Brain microvascular endothelial cell (primary cell): ENCODE measurements at regions of chr5 and their contacts with region 1.

Region 1: DNA sequence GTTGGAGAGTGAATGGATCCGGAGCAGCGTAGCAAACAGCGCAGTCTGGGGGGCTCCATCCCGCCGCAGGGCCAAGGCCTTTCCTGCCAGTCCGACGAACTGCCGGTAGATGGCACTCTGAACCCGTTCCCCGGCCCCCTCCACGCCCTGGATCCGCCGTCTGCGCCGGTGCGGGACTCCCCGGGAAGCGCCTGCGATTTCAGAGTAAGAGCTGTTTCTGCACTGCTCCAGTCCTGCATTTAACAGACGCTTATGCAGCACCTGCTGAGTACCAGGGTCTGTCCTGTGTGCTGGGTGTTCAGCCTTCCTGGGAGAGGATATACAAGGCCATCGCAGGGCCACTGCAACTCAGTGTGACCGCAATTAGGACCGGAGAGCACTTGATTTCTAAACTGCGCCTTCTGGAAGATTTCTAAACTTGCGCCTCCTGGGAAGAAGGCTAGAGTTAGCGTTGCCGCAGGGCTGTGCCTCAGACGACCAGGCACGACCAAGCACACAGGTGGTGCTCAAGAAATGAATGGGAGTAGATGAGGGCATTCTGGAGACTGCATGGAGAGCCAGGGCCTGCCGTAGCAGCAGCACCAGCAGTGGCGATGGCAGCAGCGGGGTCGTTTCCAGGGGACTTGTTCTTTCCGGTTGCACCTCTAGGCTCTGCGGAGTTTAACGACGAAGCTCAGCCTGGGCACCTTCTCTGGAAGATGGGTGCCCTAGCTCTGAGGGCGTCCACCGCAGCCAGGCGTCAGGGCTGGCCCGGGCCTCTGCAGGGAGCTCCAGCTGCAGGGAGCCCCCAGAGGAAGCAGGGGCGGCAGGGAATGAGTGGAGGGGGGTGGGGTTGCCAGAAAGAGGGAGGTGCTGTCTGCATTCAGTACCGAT is 14.3 kb upstream of the TIFAB start:
- DNase-seq: peak; percentile 54
- H3K4me3 ChIP-seq: no peak overlapping the region
- H3K27ac ChIP-seq: no peak overlapping the region
- H3K27me3 ChIP-seq: peaks cover 34% of the 10 kb centered on the region
- CTCF ChIP-seq: peak; percentile 95

Region 2: DNA sequence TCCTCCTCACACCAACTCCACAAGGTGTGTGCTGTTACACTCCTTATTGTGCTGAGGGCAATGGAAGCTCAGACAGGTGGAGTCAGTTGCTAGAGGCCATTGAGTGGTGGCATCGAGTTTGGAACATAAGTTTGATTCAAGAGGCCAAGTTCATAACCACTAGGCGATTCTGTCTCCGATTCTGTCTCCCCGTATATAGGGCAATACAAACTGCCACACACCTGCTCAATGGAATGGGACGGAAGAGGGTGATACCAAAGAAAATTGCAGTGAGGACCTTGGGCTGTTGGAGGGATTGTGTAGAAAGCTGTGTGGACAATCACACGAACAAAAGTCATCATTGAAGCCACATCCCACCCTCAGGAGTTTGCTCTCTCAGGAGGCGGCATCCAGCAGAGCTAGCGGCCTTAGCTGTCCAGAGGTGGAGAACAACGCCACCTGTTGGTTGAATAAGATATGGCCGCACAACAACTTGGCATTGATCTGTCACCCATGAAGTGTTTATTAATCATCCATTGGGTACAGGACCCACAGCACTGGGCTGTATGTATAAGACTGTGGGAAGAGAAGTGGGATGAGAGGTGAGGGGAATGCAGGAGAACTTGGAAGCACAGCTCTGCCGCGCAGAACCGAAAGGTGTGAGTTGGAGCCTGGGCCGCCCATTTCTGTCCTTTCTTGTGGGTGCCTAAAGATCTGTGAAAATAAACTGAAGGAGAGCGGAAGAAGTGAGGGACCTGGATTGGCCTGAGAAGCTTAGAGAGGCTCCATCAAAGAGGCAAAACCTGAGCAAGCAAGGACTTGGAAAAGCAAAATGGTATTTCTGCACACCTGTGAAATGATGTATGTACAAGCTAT is 85.4 kb after region 1 on chr5:
- in situ Hi-C with region 1: loop called (anchors 10 kb)
- DNase-seq: peak; percentile 68
- H3K4me3 ChIP-seq: no peak overlapping the region
- H3K27ac ChIP-seq: no peak overlapping the region
- H3K27me3 ChIP-seq: peaks cover 22% of the 10 kb centered on the region
- CTCF ChIP-seq: peak; percentile 86